GM12878 (cell line): ENCODE measurements at regions of chr22 and their contacts with region 1.

Region 1: DNA sequence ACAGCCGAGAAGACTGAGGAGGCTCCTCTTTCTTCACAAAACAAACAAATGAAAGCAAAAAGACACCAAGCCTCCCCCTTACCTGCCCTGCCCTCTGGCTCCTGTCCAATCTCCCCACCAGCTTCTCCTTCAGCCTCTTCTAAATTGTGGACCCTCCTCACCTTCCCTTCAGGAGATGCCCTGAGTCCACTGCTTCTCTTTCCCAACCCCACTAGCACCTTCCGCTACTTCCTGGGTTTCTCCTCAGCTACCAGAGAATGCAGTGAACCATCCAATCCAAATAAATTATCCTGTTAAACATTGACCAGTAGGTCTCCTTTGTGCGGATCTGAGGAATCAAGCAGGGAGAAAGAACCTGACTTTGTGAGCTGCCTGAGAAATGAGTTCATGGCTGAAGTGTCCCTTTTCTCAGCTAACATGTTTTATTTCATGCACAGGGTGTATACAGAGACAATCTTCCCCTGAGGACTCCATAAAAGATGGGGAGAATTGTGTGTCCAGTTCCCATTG is 63.2 kb upstream of the VPREB1 start:
- DNase-seq: no peak
- ATAC-seq: no peak
- H3K4me3 ChIP-seq: no peak overlapping the region
- H3K27ac ChIP-seq: no peak overlapping the region
- H3K4me1 ChIP-seq: peaks cover 3% of the 10 kb centered on the region; the same call in 1 of the 2 replicates
- H3K27me3 ChIP-seq: no peaks in the 10 kb centered on the region
- CTCF ChIP-seq: no peak
- EP300 ChIP-seq: no peak
- POLR2A ChIP-seq: no peak
- RAD21 ChIP-seq: no peak

Region 2: GRCh38 chr22:22161924-22162851 is 19.2 kb before region 1 on chr22:
- CTCF ChIA-PET with region 1: interaction called, 17 read pairs
- POLR2A ChIA-PET with region 1: interaction called, 5 read pairs
- RAD21 ChIA-PET with region 1: interaction called, 9 read pairs
- SMC1A ChIA-PET with region 1: interaction called, 45 read pairs
- in situ Hi-C with region 1: no loop called
- intact Hi-C with region 1: no loop called
- DNase-seq: peak; percentile 42
- ATAC-seq: peak; percentile 92
- H3K4me3 ChIP-seq: peak overlapping the region; percentile 30; the same call in 1 of the 2 replicates
- H3K27ac ChIP-seq: no peak overlapping the region; the same call in 1 of the 2 replicates
- H3K4me1 ChIP-seq: peaks cover 19% of the 10 kb centered on the region
- H3K27me3 ChIP-seq: no peaks in the 10 kb centered on the region
- CTCF ChIP-seq: no peak
- EP300 ChIP-seq: no peak
- POLR2A ChIP-seq: peak; percentile 86
- RAD21 ChIP-seq: no peak

Region 3: GRCh38 chr22:22168190-22168940 is 13.0 kb before region 1 on chr22:
- CTCF ChIA-PET with region 1: interaction called, 18 read pairs
- POLR2A ChIA-PET with region 1: interaction called, 5 read pairs
- RAD21 ChIA-PET with region 1: interaction called, 9 read pairs
- SMC1A ChIA-PET with region 1: interaction called, 45 read pairs
- in situ Hi-C with region 1: no loop called
- intact Hi-C with region 1: no loop called
- DNase-seq: peak; percentile 57
- ATAC-seq: peak; percentile 74
- H3K4me3 ChIP-seq: peak overlapping the region; percentile 52; the same call in 1 of the 2 replicates
- H3K27ac ChIP-seq: peak overlapping the region; percentile 83
- H3K4me1 ChIP-seq: peaks cover 15% of the 10 kb centered on the region
- H3K27me3 ChIP-seq: no peaks in the 10 kb centered on the region
- CTCF ChIP-seq: no peak
- EP300 ChIP-seq: no peak
- POLR2A ChIP-seq: no peak; the same call in 1 of the 2 replicates
- RAD21 ChIP-seq: no peak